Ovary (tissue), 10 donors: ENCODE measurements at regions of chrX and their contacts with region 1.

Region 1: DNA sequence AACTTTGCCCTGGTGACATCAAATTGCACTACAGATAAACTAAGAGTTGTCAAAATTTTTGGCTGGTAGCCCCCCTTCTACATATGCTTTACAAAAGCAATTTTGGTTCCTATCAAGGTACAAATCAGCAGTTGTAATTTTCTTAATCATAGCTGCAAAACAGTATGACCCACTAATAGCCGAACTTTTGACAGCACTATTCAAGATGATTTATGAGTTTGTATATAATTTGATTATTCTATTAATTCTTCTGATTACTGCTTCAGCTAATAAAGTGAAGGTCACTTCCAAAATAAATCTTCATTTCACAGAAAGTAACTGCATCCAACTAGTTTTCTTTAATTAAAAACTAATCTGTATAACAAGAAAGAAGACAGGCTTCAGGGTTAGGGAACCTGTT is 119.6 kb downstream of the CHM start:
- DNase-seq: no peak
- H3K4me3 ChIP-seq: no peak overlapping the region
- H3K27ac ChIP-seq: no peak overlapping the region
- H3K4me1 ChIP-seq: no peaks in the 10 kb centered on the region
- H3K27me3 ChIP-seq: no peaks in the 10 kb centered on the region
- CTCF ChIP-seq: no peak
- EP300 ChIP-seq: no peak
- POLR2A ChIP-seq: no peak

Region 2: DNA sequence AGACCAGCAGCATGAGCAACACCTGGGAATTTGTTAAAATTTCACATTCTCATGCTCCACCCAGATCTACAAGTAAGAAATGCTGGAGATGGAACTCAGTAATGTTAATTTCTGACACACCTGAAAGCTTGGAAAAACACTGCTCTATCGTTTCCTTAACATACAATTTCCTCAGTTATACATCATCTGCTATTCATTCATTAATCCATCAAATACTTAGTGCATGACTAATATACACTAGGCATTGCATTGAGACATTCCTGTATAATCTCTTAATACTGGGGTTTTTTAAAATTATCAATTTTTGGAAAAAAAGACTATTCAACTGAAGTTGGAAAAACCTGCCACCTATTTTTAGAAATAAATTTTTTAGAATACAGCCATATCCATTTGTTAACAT is 13.5 kb after region 1 on chrX:
- intact Hi-C with region 1: loop called in 1 of 4 experiments (anchors 1 kb)
- DNase-seq: no peak
- H3K4me3 ChIP-seq: no peak overlapping the region
- H3K27ac ChIP-seq: no peak overlapping the region
- H3K4me1 ChIP-seq: no peaks in the 10 kb centered on the region
- H3K27me3 ChIP-seq: no peaks in the 10 kb centered on the region
- CTCF ChIP-seq: no peak
- EP300 ChIP-seq: no peak
- POLR2A ChIP-seq: no peak